Activated B cell treated with CpG ODN at 0.5 μM for 24 hours (primary cell): ENCODE measurements at regions of chr17 and their contacts with region 1.

Region 1: DNA sequence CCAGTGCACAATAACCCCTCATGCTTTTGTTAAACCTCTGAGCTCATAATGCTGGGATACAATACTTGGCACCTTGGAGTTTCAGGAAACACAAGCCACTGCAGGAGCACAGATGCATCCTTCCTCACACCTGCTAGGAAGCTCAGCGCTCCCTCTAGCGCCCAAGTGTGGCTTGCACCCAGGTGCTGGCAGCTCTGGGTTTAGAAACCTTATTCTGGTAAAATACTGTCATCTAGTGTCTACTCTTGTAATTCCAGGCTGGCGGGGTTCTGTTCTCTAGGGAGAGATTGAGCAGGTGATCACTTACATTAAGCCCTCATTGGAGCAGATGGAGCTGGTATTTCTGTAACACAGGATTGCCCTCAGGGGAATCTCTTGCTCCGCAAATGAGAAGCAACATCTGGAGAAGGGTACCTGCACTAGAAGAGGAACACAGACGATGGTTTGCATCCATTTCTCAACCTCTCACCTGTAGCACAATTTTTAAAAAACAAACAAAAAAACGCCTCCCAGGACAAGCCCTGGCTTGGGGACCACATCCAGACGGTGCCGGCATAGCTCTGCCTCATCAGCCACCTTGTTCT is 1.5 kb downstream of the CCL1 start:
- DNase-seq: peak; percentile 59
- ATAC-seq: peak; percentile 96
- H3K4me3 Mint-ChIP-seq: no peak overlapping the region
- H3K27ac Mint-ChIP-seq: no peak overlapping the region
- H3K4me1 Mint-ChIP-seq: peaks cover 5% of the 10 kb centered on the region
- H3K27me3 Mint-ChIP-seq: peaks cover 13% of the 10 kb centered on the region
- CTCF ChIP-seq: peak; percentile 93

Region 2: DNA sequence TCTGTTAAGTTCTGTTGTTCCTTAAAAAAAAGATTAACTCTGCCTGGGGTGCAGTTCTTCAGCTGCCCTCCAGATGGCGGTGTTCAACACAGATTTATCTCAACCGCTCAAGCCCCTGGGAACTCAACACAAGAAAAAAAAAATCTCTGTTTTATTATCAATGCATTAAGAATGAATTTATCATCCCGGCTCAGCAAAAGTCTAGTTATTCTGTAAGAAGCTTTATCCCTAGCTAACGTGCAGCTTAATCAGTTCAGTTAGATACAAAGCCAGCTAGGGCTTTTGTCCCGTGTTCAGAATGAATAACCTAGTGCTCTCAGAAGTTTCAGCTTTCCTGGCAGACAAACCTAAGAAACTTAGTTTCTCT is 582.4 kb before region 1 on chr17:
- CTCF ChIA-PET with region 1: no interaction called
- POLR2A ChIA-PET with region 1: no interaction called
- intact Hi-C with region 1: loop called (anchors 5 kb)
- DNase-seq: no peak
- ATAC-seq: peak; percentile 25
- H3K4me3 Mint-ChIP-seq: no peak overlapping the region
- H3K27ac Mint-ChIP-seq: no peak overlapping the region
- H3K4me1 Mint-ChIP-seq: no peaks in the 10 kb centered on the region
- H3K27me3 Mint-ChIP-seq: peaks cover 2% of the 10 kb centered on the region
- CTCF ChIP-seq: peak; percentile 80

Region 3: GRCh38 chr17:33927732-33928133 is 433.8 kb before region 1 on chr17:
- CTCF ChIA-PET with region 1: no interaction called
- POLR2A ChIA-PET with region 1: no interaction called
- intact Hi-C with region 1: loop called (anchors 5 kb)
- DNase-seq: no peak
- ATAC-seq: no peak
- H3K4me3 Mint-ChIP-seq: no peak overlapping the region
- H3K27ac Mint-ChIP-seq: no peak overlapping the region
- H3K4me1 Mint-ChIP-seq: no peaks in the 10 kb centered on the region
- H3K27me3 Mint-ChIP-seq: peaks cover 10% of the 10 kb centered on the region
- CTCF ChIP-seq: no peak

Region 4: DNA sequence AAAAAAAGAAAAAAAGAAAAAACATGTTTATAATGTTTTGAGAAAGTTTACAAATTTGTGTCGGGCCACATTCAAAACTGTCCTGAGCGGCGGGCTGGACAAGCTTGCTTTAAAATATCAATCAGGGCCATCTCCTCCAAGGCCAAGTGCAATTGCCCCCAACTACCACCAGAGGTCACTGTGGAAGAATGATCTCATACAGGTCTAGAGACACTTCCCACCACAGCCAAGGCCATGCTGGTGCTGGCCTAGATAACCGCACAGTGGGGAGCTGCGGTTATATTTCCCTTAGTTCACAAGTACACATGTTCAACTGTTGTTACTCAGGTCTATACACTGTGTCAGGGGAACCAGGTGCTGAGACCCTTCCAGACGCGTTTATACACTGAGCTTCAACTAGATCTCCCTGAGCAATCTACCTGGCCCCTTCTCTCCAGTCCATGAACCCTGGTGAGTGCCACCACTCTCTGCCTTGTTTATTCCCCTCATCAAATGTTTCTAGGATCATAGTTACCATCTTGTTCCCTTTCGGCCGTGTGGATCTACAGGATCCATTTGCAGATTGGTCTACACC is 190.2 kb before region 1 on chr17:
- CTCF ChIA-PET with region 1: interaction called, 27 read pairs
- POLR2A ChIA-PET with region 1: interaction called, 3 read pairs
- intact Hi-C with region 1: loop called (anchors 1 kb)
- DNase-seq: peak; percentile 18
- ATAC-seq: peak; percentile 49
- H3K4me3 Mint-ChIP-seq: no peak overlapping the region
- H3K27ac Mint-ChIP-seq: no peak overlapping the region
- H3K4me1 Mint-ChIP-seq: no peaks in the 10 kb centered on the region
- H3K27me3 Mint-ChIP-seq: peaks cover 5% of the 10 kb centered on the region
- CTCF ChIP-seq: peak; percentile 83

Region 5: GRCh38 chr17:34199932-34200534 is 161.5 kb before region 1 on chr17:
- CTCF ChIA-PET with region 1: interaction called, 173 read pairs
- POLR2A ChIA-PET with region 1: interaction called, 3 read pairs
- intact Hi-C with region 1: loop called (anchors 1 kb)
- DNase-seq: peak; percentile 25
- ATAC-seq: peak; percentile 93
- H3K4me3 Mint-ChIP-seq: no peak overlapping the region
- H3K27ac Mint-ChIP-seq: no peak overlapping the region
- H3K4me1 Mint-ChIP-seq: peaks cover 2% of the 10 kb centered on the region
- H3K27me3 Mint-ChIP-seq: peaks cover 27% of the 10 kb centered on the region
- CTCF ChIP-seq: peak; percentile 99

Region 6: DNA sequence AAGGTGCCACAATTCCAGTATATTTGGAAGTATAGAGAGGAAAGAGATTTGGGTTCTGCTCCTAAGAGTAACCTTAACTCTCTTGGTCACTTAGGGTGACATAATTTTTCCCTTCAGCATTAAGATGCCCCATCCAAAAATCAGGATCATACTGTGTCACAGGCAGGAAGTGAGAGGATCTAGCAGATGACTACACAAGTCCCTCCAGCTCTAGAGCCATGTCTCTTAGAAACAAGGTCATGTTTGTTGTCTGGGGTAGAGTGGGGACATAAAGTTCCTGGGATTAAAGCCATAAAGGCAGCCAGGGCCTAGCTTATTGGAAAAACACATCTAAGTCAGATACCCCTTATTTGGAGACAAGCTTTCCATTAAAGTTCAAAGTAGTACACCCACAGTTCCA is 39.6 kb before region 1 on chr17:
- CTCF ChIA-PET with region 1: no interaction called
- POLR2A ChIA-PET with region 1: no interaction called
- intact Hi-C with region 1: no loop called
- DNase-seq: no peak
- ATAC-seq: no peak
- H3K4me3 Mint-ChIP-seq: no peak overlapping the region
- H3K27ac Mint-ChIP-seq: no peak overlapping the region
- H3K4me1 Mint-ChIP-seq: no peaks in the 10 kb centered on the region
- H3K27me3 Mint-ChIP-seq: peaks cover 17% of the 10 kb centered on the region
- CTCF ChIP-seq: no peak

Region 7: DNA sequence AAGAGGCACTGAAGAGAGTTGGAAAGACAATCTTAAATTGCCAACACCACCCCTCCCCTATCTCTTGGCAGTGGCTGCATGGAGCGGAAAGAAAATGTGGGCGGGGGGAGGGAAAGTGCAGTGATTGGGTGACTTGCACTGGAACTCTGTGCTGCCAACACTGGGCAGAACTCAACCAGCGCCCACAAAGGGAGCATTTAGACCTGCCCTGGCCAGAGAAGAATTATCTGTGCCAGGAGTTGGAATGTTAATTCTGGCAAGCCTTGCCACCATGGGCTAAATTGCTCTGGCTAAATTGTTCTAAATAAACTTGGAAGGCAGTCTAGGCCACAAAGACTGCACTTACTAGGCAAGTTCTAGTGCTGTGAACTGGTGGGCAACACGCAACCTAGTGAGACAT is 11.8 kb before region 1 on chr17:
- CTCF ChIA-PET with region 1: interaction called, 10 read pairs
- POLR2A ChIA-PET with region 1: no interaction called
- intact Hi-C with region 1: no loop called
- DNase-seq: no peak
- ATAC-seq: no peak
- H3K4me3 Mint-ChIP-seq: no peak overlapping the region
- H3K27ac Mint-ChIP-seq: no peak overlapping the region
- H3K4me1 Mint-ChIP-seq: no peaks in the 10 kb centered on the region
- H3K27me3 Mint-ChIP-seq: peaks cover 17% of the 10 kb centered on the region
- CTCF ChIP-seq: no peak

Region 8: GRCh38 chr17:34378664-34379101 is 17.1 kb after region 1 on chr17:
- CTCF ChIA-PET with region 1: interaction called, 15 read pairs
- POLR2A ChIA-PET with region 1: no interaction called
- intact Hi-C with region 1: no loop called
- DNase-seq: no peak
- ATAC-seq: peak; percentile 79
- H3K4me3 Mint-ChIP-seq: peak overlapping the region; percentile 53
- H3K27ac Mint-ChIP-seq: peak overlapping the region; percentile 76
- H3K4me1 Mint-ChIP-seq: peaks cover 55% of the 10 kb centered on the region
- H3K27me3 Mint-ChIP-seq: no peaks in the 10 kb centered on the region
- CTCF ChIP-seq: no peak